Ascending aorta (tissue), 2 donors: ENCODE measurements at regions of chr1 and their contacts with region 1.

Region 1: DNA sequence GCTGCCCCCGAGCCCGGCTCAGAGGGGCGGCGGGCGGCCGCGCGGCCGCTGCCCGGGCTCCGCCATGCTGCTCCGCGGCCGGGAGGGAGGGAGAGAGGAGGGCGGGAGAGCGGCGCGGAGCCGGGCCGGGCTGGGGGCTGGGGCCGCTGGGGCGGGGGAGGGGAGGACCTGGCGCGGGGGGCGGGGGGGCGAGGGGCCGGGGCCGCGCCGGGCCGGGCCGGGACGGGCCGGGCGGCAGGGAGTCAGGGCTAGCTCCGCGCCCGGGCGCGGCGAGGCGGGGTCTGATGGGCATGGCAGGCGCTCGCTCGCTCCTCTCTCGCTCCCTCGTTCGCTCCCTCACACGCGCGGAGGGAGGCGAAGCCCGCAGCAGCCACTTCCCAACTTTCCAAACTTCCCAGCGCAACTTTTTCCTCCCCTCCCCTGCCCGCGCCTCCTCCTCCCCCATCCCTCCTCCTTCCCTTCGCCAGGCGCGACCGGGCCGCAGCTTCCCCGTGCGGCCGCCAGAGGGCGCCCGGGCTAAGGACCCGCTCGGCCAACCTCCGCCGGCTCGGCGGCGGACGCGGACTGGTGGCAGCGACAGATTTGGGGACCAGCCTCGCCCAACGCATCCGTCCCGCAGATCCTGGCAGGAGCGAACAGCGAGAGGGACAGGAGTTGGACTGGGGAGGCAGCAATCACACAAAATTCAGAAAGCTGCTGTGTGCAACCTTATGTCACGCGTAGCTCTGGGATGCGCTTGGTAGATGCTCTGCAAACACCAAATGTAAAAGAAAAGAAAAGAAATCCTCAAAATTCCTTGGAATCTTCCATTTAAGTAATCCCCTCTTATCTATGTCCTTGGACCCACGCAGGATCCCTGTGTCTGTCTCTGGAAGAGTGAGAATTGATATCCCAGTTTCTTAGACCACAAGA is at the start of gene TRABD2B:
- DNase-seq: peak; percentile 27 to 94
- H3K4me3 ChIP-seq: peak within 1 kb of the TSS; percentile 74 to 96
- H3K27ac ChIP-seq: peak within 1 kb of the TSS; percentile 87 to 90
- H3K4me1 ChIP-seq: peaks cover 0 to 18% of the 10 kb centered on the region in 2 donors
- H3K27me3 ChIP-seq: no peaks in the 10 kb centered on the region
- CTCF ChIP-seq: peak; percentile 92 to 99 (median 99)
- total RNA-seq, gene TRABD2B: 7.9 TPM

Region 2: GRCh38 chr1:47785561-47786271 is 211.8 kb before region 1 on chr1:
- intact Hi-C with region 1: loop called (anchors 5 kb)
- DNase-seq: peak in 1 of 2 donors; percentile 74
- H3K4me3 ChIP-seq: no peak overlapping the region
- H3K27ac ChIP-seq: peak overlapping the region; percentile 44 to 46
- H3K4me1 ChIP-seq: peaks cover 7 to 34% of the 10 kb centered on the region in 2 donors
- H3K27me3 ChIP-seq: no peaks in the 10 kb centered on the region
- CTCF ChIP-seq: peak; percentile 46 to 65 (median 63)

Region 3: DNA sequence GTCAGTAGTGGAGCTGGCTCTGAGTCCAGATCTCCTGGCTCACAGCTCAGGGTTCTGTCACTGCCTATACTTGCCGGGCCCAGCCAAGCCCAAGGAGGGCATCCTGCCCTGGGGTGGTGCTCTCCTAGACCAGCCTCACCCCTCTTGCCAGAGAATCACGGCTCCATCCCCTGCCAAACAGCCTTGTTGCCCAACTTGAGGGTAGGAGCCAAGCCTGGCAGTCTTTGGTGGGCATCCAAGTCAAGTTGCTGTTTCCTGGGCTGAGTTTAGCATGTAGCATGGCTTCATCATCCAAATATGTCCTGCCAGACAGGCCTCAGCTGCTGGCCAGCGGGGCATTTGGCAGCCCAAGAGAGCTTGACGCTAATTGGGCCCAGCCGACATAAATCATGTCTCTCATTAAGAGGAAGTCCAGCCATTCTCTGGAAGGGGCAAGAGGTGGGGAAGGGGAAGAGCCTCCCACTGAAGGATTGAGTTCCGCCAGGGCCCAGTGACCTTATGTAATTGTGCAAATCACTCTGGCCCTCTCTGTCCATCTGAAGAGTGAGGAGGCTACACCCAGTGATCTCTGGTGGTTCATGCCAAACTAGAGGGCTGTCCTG is 22.3 kb after region 1 on chr1:
- intact Hi-C with region 1: loop called (anchors 2 kb)
- DNase-seq: peak; percentile 78 to 95
- H3K4me3 ChIP-seq: no peak overlapping the region
- H3K27ac ChIP-seq: peak overlapping the region; percentile 79 to 81
- H3K4me1 ChIP-seq: peaks cover 0 to 27% of the 10 kb centered on the region in 2 donors
- H3K27me3 ChIP-seq: no peaks in the 10 kb centered on the region
- CTCF ChIP-seq: no peak

Region 4: DNA sequence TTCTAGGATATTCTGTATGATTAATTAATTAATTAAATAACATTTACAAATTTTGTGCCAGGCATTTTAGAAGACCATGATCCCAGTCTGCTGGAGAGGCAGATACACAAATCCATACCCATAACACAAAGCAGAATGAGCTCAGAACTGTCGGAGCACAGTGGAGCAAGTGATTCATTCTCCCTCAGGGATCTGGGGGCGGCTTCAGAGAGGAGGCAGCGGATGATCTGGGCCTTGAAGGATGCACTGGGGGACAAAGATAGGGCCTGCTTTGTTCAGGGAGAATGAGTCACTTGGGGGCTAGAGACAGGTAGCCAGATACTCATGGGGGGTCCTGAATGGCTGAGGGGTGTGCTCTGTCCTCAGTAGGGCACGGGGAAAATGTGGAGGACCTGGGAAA is 50.5 kb after region 1 on chr1:
- intact Hi-C with region 1: no loop called
- DNase-seq: peak; percentile 16 to 72
- H3K4me3 ChIP-seq: no peak overlapping the region
- H3K27ac ChIP-seq: peak overlapping the region; percentile 82 to 88
- H3K4me1 ChIP-seq: peaks cover 15 to 32% of the 10 kb centered on the region in 2 donors
- H3K27me3 ChIP-seq: no peaks in the 10 kb centered on the region
- CTCF ChIP-seq: no peak

Region 5: DNA sequence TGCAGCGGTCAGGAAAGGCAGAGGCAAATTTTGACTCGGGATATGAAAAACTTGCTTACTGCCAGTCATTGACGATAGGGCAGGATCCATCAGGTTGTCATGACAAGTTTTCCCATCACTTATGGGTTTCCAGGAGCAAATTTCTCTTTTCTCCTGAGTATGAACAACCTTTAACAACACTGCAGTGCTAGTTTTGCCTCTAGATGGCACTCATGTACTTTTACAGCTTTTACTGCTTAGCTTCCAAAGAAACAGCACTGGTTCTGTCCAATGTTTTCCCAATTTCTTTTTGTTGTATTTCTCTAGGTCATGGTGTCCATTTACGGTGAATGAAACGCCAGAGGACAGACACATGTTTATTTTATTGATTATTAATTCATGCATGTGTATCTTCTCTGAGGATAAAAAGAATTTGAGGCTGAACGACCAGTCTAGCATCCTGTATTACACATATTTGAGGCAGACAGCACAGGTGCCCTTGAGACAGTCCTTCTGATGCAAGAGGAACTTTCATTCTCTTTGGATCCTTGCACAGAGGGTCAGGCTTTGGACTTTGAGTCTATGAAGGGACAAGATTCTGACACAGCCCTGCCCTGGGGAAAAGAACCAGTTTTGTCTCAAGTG is 112.0 kb after region 1 on chr1:
- intact Hi-C with region 1: loop called (anchors 2 kb)
- DNase-seq: no peak
- H3K4me3 ChIP-seq: no peak overlapping the region
- H3K27ac ChIP-seq: no peak overlapping the region
- H3K4me1 ChIP-seq: no peaks in the 10 kb centered on the region
- H3K27me3 ChIP-seq: no peaks in the 10 kb centered on the region
- CTCF ChIP-seq: peak; percentile 52 to 87 (median 77)